ENCODE measurements at regions of chr2 and their contacts with region 1.

Region 1: DNA sequence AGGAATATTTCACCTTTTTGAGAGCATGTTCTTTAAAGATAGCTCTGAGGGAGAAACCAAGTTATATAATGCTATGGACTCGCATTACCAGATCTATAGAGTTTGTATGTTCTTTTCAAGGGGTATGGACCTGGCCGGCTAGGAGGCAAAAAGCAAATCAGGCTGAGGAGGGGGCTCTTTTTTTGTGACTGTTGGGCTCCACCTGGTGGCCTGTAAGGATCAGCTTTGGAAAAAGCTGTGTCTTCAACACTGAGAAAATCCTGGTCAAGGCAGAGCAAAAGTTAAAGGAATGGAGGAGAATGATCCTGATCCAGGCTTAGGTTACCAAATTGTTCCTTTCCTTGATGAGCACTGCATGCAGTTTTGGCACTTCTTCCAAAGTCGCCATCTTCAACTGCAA is 180.5 kb downstream of the DIS3L2 start:
- DNase-seq: no peak
- ATAC-seq: no peak
- H3K4me3 Mint-ChIP-seq: no peak overlapping the region
- H3K27ac Mint-ChIP-seq: no peak overlapping the region
- H3K4me1 Mint-ChIP-seq: peaks cover 21% of the 10 kb centered on the region
- H3K27me3 Mint-ChIP-seq: no peaks in the 10 kb centered on the region
- CTCF ChIP-seq: no peak

Region 2: DNA sequence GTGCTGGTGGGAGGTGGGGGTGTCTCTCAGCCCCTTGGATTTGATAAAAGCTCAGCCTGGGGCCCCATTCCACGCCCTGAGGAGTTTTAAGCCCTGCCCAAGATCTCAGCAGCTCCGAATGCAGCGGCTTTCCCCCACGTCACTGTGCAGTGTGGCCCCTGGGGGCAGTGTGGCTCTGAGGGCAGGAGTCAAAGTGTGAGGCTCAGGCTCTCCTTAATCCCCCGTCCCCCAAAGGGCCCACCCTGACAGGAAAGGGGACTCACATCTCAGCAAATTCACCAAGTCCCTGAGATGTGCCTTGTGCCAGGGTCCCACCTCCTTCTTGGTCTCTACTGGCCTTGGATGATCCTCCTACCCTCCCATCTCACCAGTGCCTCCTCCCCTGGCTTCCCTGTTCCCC is 241.1 kb before region 1 on chr2:
- CTCF ChIA-PET with region 1: interaction called, 19 read pairs
- POLR2A ChIA-PET with region 1: no interaction called
- intact Hi-C with region 1: loop called (anchors 1 kb)
- DNase-seq: no peak
- ATAC-seq: no peak
- H3K4me3 Mint-ChIP-seq: no peak overlapping the region
- H3K27ac Mint-ChIP-seq: no peak overlapping the region
- H3K4me1 Mint-ChIP-seq: no peaks in the 10 kb centered on the region
- H3K27me3 Mint-ChIP-seq: no peaks in the 10 kb centered on the region
- CTCF ChIP-seq: no peak

Region 3: GRCh38 chr2:231925303-231926179 is 216.5 kb before region 1 on chr2:
- CTCF ChIA-PET with region 1: interaction called, 9 read pairs
- POLR2A ChIA-PET with region 1: no interaction called
- intact Hi-C with region 1: loop called (anchors 1 kb)
- DNase-seq: peak; percentile 71
- ATAC-seq: peak; percentile 70
- H3K4me3 Mint-ChIP-seq: peak overlapping the region; percentile 65
- H3K27ac Mint-ChIP-seq: no peak overlapping the region
- H3K4me1 Mint-ChIP-seq: peaks cover 13% of the 10 kb centered on the region
- H3K27me3 Mint-ChIP-seq: peaks cover 47% of the 10 kb centered on the region
- CTCF ChIP-seq: no peak

Measured in activated B cell treated with CpG ODN at 0.5 μM for 24 hours (primary cell).